Activated T-helper 2 cell treated with anti-CD3 and anti-CD28 coated beads, Interferon-gamma antibody, Interleukin-2, Interleukin-4, amounts not matched to agents 10 μg/mL and 5 μg/mL and 100 μg/mL, durations not matched to agents 14 hours and 24 hours and 36 hours (primary cell): ENCODE measurements at regions of chr6 and their contacts with region 1.

Region 1: DNA sequence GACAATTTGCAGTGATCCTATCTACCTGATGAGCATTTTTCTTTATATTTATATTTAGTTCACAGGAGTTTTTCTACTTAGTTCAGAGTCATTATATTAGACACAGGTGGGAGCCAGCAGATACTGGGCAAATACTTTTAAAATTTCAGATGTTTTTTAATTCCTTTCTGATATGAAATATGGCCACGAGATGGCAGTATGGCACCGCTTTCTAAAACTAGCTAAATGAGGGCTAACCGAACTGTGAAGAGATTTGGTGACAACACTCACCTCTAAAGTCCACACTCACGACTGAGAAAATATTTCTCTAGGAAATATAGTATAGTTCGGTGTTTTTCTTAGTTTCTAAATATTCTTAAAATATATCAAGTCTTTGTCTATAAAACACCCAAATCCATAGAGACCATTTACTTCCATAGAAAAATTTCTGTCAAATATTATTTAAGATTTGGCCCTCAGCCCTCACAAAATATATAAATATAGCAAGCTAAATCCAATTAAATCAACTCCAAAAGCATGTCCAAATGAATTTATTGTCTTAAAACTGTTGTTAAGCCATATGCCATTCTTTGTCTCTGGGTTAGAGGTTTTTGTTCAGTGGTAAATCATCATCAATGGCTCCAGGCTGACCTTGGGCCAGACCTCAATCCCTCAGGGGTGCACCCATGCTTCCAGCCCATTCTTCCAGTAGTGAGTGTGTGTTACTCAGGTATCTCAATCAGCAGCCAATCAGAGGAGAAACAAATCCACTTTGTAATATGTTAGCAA is 63.6 kb downstream of the HUS1B start:
- DNase-seq: peak; percentile 40
- H3K4me3 Mint-ChIP-seq: no peak overlapping the region
- H3K27ac Mint-ChIP-seq: no peak overlapping the region
- H3K4me1 Mint-ChIP-seq: peaks cover 32% of the 10 kb centered on the region
- H3K27me3 Mint-ChIP-seq: no peaks in the 10 kb centered on the region

Region 2: DNA sequence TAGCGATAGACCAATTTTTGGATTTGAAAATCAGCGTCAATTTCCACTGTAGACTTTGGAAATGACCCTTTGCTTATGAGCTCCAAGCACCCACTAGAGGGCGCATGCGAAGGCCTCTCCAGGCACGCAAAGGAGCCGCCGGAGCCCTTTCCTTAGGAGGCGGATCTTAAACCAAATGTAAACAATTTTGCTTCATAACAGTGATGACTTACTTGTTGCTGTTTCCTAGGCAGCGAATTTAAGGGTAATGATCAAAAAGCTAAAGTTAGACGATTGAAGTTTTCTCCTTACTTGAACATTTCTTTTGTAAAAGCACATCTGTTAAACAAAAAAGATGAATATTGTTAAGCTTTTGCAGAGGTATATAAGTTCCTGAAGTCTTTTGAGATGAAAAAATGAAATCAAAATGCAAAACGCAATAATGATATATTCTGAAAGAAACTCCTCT is 128.8 kb after region 1 on chr6:
- intact Hi-C with region 1: loop called (anchors 5 kb)
- DNase-seq: peak; percentile 62
- H3K4me3 Mint-ChIP-seq: no peak overlapping the region
- H3K27ac Mint-ChIP-seq: no peak overlapping the region
- H3K4me1 Mint-ChIP-seq: peaks cover 5% of the 10 kb centered on the region
- H3K27me3 Mint-ChIP-seq: peaks cover 20% of the 10 kb centered on the region

Region 3: DNA sequence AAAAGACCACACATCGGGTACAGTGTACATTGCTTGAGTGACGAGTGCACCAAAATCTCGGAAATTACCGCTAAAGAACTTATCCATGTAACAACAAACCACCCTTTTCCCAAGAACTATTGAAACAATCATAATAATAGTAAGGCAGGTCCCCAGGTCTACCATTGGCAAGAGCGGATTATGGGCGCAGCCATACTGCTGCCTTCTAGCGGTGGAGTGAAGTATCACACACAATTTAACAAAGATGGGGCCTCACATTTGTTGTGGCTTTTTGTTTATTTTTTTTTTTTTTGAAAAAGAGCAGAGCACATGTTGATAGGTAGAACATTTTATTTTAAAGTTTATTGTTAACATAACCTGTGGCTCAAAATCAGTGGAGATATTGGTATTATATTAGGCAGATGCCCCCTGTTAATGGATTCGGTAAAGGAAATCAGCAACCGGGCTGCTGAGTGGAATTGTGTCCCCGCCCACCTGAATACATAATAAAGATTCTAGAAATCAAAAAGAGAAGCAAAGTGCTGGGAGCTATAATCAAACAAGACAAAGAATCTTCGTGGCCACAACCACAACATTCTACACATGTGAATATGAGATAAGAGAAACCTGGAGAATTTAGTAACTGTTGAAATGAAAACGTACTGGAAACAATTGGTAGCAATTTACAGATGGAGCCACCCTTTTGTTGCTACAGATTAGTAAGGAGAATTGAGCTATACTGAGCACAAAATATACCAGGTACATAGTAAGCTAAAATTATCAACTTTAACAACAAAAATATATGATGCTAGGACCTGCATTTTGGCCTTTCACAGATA is 193.8 kb after region 1 on chr6:
- intact Hi-C with region 1: loop called (anchors 2 kb)
- DNase-seq: no peak
- H3K4me3 Mint-ChIP-seq: no peak overlapping the region
- H3K27ac Mint-ChIP-seq: no peak overlapping the region
- H3K4me1 Mint-ChIP-seq: peaks cover 17% of the 10 kb centered on the region
- H3K27me3 Mint-ChIP-seq: peaks cover 3% of the 10 kb centered on the region

Region 4: DNA sequence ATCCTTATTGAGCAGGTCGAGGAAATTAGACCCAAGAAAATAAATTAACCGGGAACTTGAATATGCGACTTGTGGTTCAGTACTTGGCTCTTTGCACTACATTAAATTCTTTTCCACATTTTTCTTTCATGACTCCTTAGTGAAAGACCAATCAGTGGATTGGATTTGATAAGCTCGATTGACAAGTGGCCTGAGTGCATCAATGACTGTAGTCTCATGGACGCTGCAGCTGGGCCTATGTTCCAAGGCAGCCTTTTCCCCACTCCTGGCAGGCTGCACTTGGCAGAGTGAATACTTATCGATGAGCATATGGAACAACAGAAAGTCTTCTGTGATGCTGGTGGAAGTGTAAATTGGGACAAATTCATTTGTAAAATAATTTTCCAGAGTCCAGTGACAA is 310.4 kb after region 1 on chr6:
- intact Hi-C with region 1: loop called (anchors 10 kb)
- DNase-seq: no peak
- H3K4me3 Mint-ChIP-seq: no peak overlapping the region
- H3K27ac Mint-ChIP-seq: no peak overlapping the region
- H3K4me1 Mint-ChIP-seq: no peaks in the 10 kb centered on the region
- H3K27me3 Mint-ChIP-seq: no peaks in the 10 kb centered on the region

Region 5: GRCh38 chr6:1381481-1382330 is 788.4 kb after region 1 on chr6:
- intact Hi-C with region 1: loop called (anchors 5 kb)
- DNase-seq: peak; percentile 46
- H3K4me3 Mint-ChIP-seq: no peak overlapping the region
- H3K27ac Mint-ChIP-seq: no peak overlapping the region
- H3K4me1 Mint-ChIP-seq: peaks cover 24% of the 10 kb centered on the region
- H3K27me3 Mint-ChIP-seq: peaks cover 73% of the 10 kb centered on the region

Region 6: GRCh38 chr6:1396952-1397868 is 803.9 kb after region 1 on chr6:
- intact Hi-C with region 1: loop called (anchors 5 kb)
- DNase-seq: peak; percentile 50
- H3K4me3 Mint-ChIP-seq: no peak overlapping the region
- H3K27ac Mint-ChIP-seq: no peak overlapping the region
- H3K4me1 Mint-ChIP-seq: peaks cover 9% of the 10 kb centered on the region
- H3K27me3 Mint-ChIP-seq: peaks cover 56% of the 10 kb centered on the region